Activated CD8-positive, alpha-beta T cell treated with anti-CD3 and anti-CD28 coated beads for 36 hours (primary cell): ENCODE measurements at regions of chr18 and their contacts with region 1.

Region 1: DNA sequence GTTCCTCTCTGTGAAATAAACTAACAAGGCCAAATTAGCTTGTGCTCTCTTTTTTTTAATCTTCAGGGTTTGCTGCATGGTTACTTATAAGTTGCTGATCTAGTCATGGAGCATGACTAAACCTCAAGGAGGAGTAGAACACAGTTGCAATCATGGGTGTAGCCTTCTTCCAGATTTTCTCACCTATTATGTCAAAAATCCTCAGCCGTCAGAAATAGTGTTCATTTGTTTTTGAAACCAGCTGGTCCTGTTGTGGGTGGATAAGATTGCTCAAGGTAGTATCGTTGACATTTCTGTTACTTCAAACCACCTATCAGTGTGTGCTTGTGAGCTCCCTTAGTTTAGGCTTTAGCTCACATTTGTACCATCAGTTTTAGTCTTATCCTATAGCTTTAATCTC is 11.2 kb downstream of the RELCH start:
- DNase-seq: no peak
- ATAC-seq: peak; percentile 58
- H3K4me3 Mint-ChIP-seq: no peak overlapping the region
- H3K27ac Mint-ChIP-seq: no peak overlapping the region
- H3K4me1 Mint-ChIP-seq: peaks cover 59% of the 10 kb centered on the region
- H3K27me3 Mint-ChIP-seq: no peaks in the 10 kb centered on the region
- CTCF ChIP-seq: no peak

Region 2: GRCh38 chr18:62186774-62187542 is 11.3 kb before region 1 on chr18 and contains the starts of genes PIGN and RELCH:
- CTCF ChIA-PET with region 1: interaction called, 10 read pairs
- POLR2A ChIA-PET with region 1: interaction called, 13 read pairs
- intact Hi-C with region 1: no loop called
- DNase-seq: peak; percentile 97
- ATAC-seq: peak; percentile 94
- H3K4me3 Mint-ChIP-seq: peak within 1 kb of the TSS; percentile 99
- H3K27ac Mint-ChIP-seq: peak within 1 kb of the TSS; percentile 96
- H3K4me1 Mint-ChIP-seq: peaks cover 48% of the 10 kb centered on the region
- H3K27me3 Mint-ChIP-seq: no peaks in the 10 kb centered on the region
- CTCF ChIP-seq: no peak
- total RNA-seq, gene PIGN: 24.9 to 28.1 TPM
- total RNA-seq, gene RELCH: 18.4 to 21.7 TPM

Region 3: GRCh38 chr18:62522504-62523254 is 324.4 kb after region 1 on chr18 and contains the start of gene ZCCHC2:
- CTCF ChIA-PET with region 1: no interaction called
- POLR2A ChIA-PET with region 1: no interaction called
- intact Hi-C with region 1: loop called (anchors 10 kb)
- DNase-seq: peak; percentile 97
- ATAC-seq: peak; percentile 80
- H3K4me3 Mint-ChIP-seq: peak within 1 kb of the TSS; percentile 84
- H3K27ac Mint-ChIP-seq: peak within 1 kb of the TSS; percentile 89
- H3K4me1 Mint-ChIP-seq: peaks cover 20% of the 10 kb centered on the region
- H3K27me3 Mint-ChIP-seq: no peaks in the 10 kb centered on the region
- CTCF ChIP-seq: no peak
- total RNA-seq, gene ZCCHC2: 31.7 to 33.4 TPM